Activated T-helper 2 cell treated with anti-CD3 and anti-CD28 coated beads, Interferon-gamma antibody, Interleukin-2, Interleukin-4, amounts not matched to agents 10 μg/mL and 5 μg/mL and 100 μg/mL, durations not matched to agents 14 hours and 24 hours and 36 hours (primary cell): ENCODE measurements at regions of chr3 and their contacts with region 1.

Region 1: GRCh38 chr3:179015551-179016020 is 56.0 kb downstream of the ZMAT3 start:
- DNase-seq: peak; percentile 62
- H3K4me3 Mint-ChIP-seq: no peak overlapping the region
- H3K27ac Mint-ChIP-seq: peak overlapping the region; percentile 2
- H3K4me1 Mint-ChIP-seq: peaks cover 35% of the 10 kb centered on the region
- H3K27me3 Mint-ChIP-seq: peaks cover 17% of the 10 kb centered on the region

Region 2: GRCh38 chr3:179037351-179037750 is 21.8 kb after region 1 on chr3:
- intact Hi-C with region 1: loop called (anchors 2 kb)
- DNase-seq: peak; percentile 40
- H3K4me3 Mint-ChIP-seq: peak overlapping the region; percentile 62
- H3K27ac Mint-ChIP-seq: peak overlapping the region; percentile 17
- H3K4me1 Mint-ChIP-seq: peaks cover 2% of the 10 kb centered on the region
- H3K27me3 Mint-ChIP-seq: no peaks in the 10 kb centered on the region

Region 3: DNA sequence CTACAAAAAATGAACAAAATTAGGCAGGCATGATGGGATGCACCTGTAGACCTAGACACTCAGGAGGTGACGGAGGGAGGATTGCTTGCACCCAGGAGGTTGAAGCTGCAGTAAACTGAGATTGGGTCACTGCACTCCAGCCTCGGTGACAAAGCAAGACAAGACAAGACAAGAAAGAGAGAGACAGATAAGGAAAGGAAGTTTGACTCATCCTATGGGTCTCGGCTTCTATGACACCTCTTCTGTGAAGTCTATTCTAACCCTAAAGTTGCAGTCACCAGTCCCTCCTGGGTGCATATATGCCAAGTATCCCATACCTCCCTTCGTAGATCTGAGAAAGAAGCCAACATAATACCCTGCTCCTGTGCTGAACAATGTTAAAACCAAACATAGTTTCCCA is 64.0 kb after region 1 on chr3:
- intact Hi-C with region 1: no loop called
- DNase-seq: no peak
- H3K4me3 Mint-ChIP-seq: no peak overlapping the region
- H3K27ac Mint-ChIP-seq: no peak overlapping the region
- H3K4me1 Mint-ChIP-seq: peaks cover 23% of the 10 kb centered on the region
- H3K27me3 Mint-ChIP-seq: no peaks in the 10 kb centered on the region